HEK293 (cell line): ENCODE measurements at regions of chr20 and their contacts with region 1.

Region 1: GRCh38 chr20:62793912-62794724 is 2.2 kb upstream of the MRGBP start:
- H3K4me3 ChIP-seq: peak overlapping the region; percentile 37
- H3K27ac ChIP-seq: 0 out of 2 replicates have a peak overlapping the region, but pooled peaks have one; percentile 35
- H3K4me1 ChIP-seq: no peaks in the 10 kb centered on the region
- CTCF ChIP-seq: no peak

Region 2: GRCh38 chr20:62500237-62500864 is 293.8 kb before region 1 on chr20:
- CTCF ChIA-PET with region 1: interaction called, 21 read pairs
- POLR2A ChIA-PET with region 1: no interaction called
- H3K4me3 ChIP-seq: no peak overlapping the region
- H3K27ac ChIP-seq: no peak overlapping the region
- H3K4me1 ChIP-seq: no peaks in the 10 kb centered on the region
- CTCF ChIP-seq: peak; percentile 93

Region 3: GRCh38 chr20:62642040-62642665 is 152.0 kb before region 1 on chr20 and contains the start of gene SLCO4A1:
- CTCF ChIA-PET with region 1: interaction called, 3 read pairs
- POLR2A ChIA-PET with region 1: interaction called, 10 read pairs
- H3K4me3 ChIP-seq: peak within 1 kb of the TSS; percentile 48
- H3K27ac ChIP-seq: peak within 1 kb of the TSS; percentile 66; the same call in 1 of the 2 replicates
- H3K4me1 ChIP-seq: no peaks in the 10 kb centered on the region; the same call in 1 of the 2 replicates
- CTCF ChIP-seq: peak; percentile 68; the same call in 1 of the 2 replicates

Region 4: DNA sequence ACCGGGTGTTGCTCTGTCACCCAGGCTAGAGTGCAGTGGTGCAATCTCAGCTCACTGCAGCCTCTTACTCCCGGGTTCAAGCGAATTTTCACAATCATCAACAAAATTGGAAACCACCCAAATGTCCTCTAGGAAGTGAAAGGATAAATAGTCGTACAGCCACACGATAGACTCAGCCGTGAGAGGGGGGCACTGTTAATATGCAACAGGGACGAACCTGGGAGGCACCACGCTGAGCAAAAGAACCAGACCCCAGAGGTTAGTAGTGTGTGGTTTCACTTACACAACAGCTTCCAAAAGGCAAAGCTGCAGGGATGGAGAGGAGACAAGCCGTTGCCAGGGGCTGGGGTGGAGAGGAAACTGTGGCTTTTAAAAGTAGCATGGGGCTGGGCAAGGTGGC is 115.6 kb before region 1 on chr20:
- CTCF ChIA-PET with region 1: interaction called, 18 read pairs
- POLR2A ChIA-PET with region 1: interaction called, 3 read pairs
- H3K4me3 ChIP-seq: no peak overlapping the region
- H3K27ac ChIP-seq: no peak overlapping the region
- H3K4me1 ChIP-seq: no peaks in the 10 kb centered on the region
- CTCF ChIP-seq: no peak

Region 5: DNA sequence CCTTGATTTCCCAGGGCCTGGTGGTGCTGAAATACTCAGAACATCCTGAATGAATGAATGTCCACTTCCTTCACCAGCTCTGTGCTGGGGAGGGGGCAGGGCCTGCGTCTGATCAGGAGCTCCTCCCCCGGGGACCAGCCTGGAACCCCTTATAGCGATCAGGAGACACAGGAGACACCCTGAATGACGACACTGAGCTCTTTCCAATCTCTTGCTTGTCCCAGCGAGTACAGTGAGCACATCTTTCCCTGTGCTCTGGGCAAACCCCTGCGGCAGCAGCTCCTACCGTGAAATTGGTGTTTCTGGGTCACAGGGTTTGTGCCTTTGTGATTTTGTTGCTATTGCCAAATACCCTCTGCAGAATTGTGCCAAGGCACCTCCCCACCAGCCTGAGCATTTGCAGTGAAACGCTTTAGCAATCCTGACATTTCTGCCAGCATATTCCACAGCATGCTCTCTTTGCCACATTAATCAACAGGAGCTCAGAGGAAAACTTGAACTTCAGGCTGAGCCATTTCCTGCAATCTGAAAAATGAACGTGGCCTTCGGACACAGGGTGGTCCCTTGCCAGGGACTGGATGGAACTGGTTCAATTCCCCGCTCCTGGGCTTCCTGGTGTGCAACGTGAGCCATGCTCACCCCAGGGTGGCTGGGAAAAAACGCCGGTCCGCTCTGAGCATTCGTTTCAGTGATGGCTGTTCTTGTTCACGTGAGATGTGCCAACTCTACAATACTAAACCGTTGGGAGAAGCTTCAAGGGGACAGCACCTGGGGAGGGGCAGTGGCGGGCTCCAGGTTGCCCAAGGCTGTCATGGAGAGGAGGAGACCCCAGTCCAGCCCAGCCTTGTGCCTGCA is 20.9 kb before region 1 on chr20:
- CTCF ChIA-PET with region 1: interaction called, 10 read pairs
- POLR2A ChIA-PET with region 1: interaction called, 4 read pairs
- H3K4me3 ChIP-seq: no peak overlapping the region
- H3K27ac ChIP-seq: no peak overlapping the region
- H3K4me1 ChIP-seq: 0 out of 2 replicates have a peak, but pooled peaks cover 3% of the 10 kb centered on the region
- CTCF ChIP-seq: no peak